Activated CD4-positive, alpha-beta T cell treated with anti-CD3 and anti-CD28 coated beads, Interleukin-2, amount 10 ng/mL, durations not matched to agents 7 days and 5 days (primary cell): ENCODE measurements at regions of chr4 and their contacts with region 1.

Region 1: GRCh38 chr4:75995727-75996126 is 5.0 kb upstream of the SDAD1 start:
- DNase-seq: peak; percentile 16
- H3K4me3 Mint-ChIP-seq: no peak overlapping the region
- H3K27ac Mint-ChIP-seq: no peak overlapping the region
- H3K4me1 Mint-ChIP-seq: peaks cover 14% of the 10 kb centered on the region
- H3K27me3 Mint-ChIP-seq: peaks cover 2% of the 10 kb centered on the region

Region 2: GRCh38 chr4:74608151-74608949 is 1387.4 kb before region 1 on chr4:
- CTCF ChIA-PET with region 1: no interaction called
- POLR2A ChIA-PET with region 1: no interaction called
- DNase-seq: no peak
- H3K4me3 Mint-ChIP-seq: no peak overlapping the region
- H3K27ac Mint-ChIP-seq: no peak overlapping the region
- H3K4me1 Mint-ChIP-seq: no peaks in the 10 kb centered on the region
- H3K27me3 Mint-ChIP-seq: no peaks in the 10 kb centered on the region

Region 3: GRCh38 chr4:76061982-76062381 is 66.3 kb after region 1 on chr4:
- CTCF ChIA-PET with region 1: interaction called, 20 read pairs
- POLR2A ChIA-PET with region 1: no interaction called
- DNase-seq: no peak
- H3K4me3 Mint-ChIP-seq: no peak overlapping the region
- H3K27ac Mint-ChIP-seq: no peak overlapping the region
- H3K4me1 Mint-ChIP-seq: peaks cover 35% of the 10 kb centered on the region
- H3K27me3 Mint-ChIP-seq: no peaks in the 10 kb centered on the region

Region 4: DNA sequence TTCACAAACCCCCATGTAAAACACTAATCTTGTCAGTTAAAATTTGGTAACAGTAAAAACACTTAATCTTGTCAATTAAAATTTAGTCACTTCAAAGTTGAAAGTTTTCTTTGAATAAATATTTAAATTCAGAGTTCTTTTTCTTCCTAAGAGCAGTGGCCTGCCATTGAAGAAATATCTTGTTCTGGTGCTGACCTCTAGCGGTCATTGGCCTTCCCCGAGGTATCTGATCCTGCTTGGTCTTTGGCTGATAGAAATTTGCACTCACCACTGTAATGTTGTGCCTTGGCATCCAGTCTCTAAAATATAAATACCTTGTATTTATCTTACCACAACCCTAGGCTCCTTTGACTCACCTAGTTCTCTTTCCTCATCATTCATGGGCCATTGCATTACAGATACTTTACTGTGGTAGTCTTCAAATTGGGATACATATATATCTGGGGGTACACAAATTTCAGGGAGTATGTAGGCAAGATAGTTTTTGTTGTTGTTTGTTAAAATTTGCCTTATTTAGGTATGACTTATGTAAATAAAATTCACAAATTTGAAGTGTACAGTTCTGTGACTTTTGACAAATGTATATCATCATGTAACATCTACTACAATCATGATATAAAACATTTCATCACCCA is 72.0 kb after region 1 on chr4:
- CTCF ChIA-PET with region 1: interaction called, 20 read pairs
- POLR2A ChIA-PET with region 1: no interaction called
- DNase-seq: peak; percentile 82
- H3K4me3 Mint-ChIP-seq: no peak overlapping the region
- H3K27ac Mint-ChIP-seq: no peak overlapping the region
- H3K4me1 Mint-ChIP-seq: no peaks in the 10 kb centered on the region
- H3K27me3 Mint-ChIP-seq: no peaks in the 10 kb centered on the region

Region 5: GRCh38 chr4:76087007-76087769 is 91.5 kb after region 1 on chr4:
- CTCF ChIA-PET with region 1: interaction called, 12 read pairs
- POLR2A ChIA-PET with region 1: no interaction called
- DNase-seq: peak; percentile 7
- H3K4me3 Mint-ChIP-seq: no peak overlapping the region
- H3K27ac Mint-ChIP-seq: no peak overlapping the region
- H3K4me1 Mint-ChIP-seq: peaks cover 5% of the 10 kb centered on the region
- H3K27me3 Mint-ChIP-seq: peaks cover 1% of the 10 kb centered on the region